ENCODE measurements at regions of chr6 and their contacts with region 1.

Region 1: DNA sequence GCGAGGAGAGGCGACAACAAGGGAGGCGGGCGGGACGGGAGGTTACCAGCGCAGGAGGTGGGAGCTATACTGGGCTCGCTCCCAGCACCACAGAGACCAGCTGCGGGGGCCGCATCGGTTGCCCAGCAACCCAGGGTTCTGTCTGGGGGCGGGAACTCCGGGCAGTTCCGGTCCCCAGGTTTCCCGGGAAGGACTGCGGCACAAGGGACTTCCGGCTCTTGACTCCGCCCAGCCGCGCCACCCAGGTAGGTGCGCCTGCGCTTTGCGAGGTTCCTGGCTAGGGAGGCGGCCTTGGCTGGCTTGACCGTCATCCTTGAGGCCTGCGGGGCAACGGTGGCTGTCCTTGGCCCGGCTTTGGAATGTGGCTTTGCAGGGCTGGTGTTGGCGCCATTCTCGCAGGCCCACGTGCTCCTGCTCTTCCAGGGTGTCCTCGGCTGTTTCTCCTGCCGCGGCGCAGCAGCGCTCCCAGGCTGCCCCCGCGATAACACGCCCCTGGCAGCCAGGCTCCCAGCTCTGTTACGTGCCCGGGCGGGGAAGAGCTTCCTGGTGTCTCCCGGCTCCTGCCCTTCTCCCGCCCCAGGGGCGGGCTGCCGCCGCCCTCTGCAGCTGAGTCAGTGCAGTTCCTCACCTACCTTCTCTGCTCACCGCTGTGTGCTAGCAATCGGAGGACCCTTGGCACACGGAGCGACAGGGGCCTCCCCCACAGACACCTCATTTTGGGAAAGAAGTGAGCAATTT is at the start of gene RSPH3:
- DNase-seq: peak; percentile 80
- ATAC-seq: peak; percentile 95
- H3K4me3 ChIP-seq: peak within 1 kb of the TSS; percentile 93 to 95
- H3K27ac ChIP-seq: peak within 1 kb of the TSS; percentile 93
- H3K4me1 ChIP-seq: peaks cover 15% of the 10 kb centered on the region
- H3K27me3 ChIP-seq: no peaks in the 10 kb centered on the region
- CTCF ChIP-seq: peak; percentile 39
- total RNA-seq, gene RSPH3: 8.1 TPM

Region 2: DNA sequence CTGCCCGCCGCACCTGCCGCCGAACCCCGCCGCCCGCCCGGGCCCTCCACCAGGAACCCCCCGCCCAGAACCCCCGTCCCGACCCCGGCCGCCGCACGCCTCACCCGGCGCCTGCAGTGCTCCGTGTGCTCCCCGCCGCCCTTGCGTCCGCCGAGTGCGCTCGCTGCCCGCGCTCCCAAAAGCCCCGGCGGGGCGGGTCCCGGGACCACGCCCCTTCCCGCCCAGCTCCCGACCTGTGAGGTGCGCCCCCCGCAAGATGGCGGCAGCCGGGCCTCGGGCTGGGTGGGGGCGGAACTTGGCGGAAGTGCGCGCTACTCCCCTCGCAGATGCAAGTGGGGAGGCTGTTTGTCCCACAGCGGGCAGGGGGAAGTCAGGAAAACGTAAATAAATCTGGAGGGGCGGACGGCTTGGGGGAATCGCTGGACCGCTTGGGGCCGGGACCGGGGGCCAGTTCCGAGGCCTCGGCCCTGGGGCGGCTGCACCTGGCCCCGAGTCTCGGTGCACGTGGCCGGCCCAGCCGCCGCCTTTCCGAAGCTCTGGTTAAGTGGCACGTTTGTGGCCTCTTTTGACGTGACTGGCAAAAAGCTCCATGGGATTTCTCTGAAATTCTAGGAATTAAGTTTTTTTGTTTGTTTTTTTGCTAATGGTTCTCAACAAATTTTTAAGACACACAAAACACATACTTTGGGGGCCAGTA is 180.5 kb before region 1 on chr6 and contains the start of gene EZR:
- CTCF ChIA-PET with region 1: no interaction called
- POLR2A ChIA-PET with region 1: interaction called, 13 read pairs
- in situ Hi-C with region 1: no loop called
- intact Hi-C with region 1: no loop called
- DNase-seq: no peak
- ATAC-seq: peak; percentile 86
- H3K4me3 ChIP-seq: peak within 1 kb of the TSS; percentile 86 to 89
- H3K27ac ChIP-seq: peak within 1 kb of the TSS; percentile 85
- H3K4me1 ChIP-seq: peaks cover 25% of the 10 kb centered on the region
- H3K27me3 ChIP-seq: no peaks in the 10 kb centered on the region
- CTCF ChIP-seq: no peak
- total RNA-seq, gene EZR: 263 TPM

Region 3: DNA sequence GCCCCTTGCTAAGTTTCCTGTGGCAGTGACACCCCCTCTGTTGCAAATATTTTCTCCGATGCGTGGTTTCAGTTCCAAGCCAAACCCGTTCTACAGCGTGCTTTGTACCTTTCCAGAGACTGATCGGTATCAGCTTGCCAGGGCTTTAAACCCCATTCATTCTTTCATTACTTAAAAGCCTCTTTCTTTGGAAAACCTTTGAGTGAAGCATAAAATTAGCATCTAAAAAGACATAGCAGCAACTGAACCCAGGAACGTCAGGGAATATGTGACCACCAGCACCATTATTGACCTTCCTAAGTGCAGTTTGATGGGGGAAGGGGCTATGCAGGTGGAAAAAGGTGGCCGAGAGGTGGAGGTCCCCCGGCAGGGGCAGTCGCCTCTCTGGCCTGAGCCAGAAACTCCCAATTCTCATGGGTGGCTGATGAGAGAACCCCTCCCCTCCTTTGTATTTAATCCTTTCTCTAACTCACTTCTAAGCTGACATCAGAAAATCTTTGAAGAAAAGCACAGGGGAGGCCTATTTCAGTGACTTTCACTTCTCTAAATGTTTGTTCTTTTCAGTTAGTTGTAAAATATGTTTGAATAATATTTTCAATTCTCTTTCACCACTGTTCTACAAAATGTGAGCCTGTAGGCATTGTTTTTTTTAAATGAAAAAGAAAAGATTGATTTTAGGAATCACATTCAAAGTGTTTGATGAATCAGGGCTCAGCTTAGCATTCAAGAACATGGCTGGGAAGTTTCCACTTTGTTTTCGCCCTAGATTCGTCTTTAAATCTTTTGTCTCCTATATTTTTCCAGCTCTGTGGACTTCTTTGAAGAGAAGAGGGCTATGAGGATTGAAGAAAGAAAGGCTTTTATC is 89.1 kb before region 1 on chr6:
- CTCF ChIA-PET with region 1: no interaction called
- POLR2A ChIA-PET with region 1: no interaction called
- in situ Hi-C with region 1: no loop called
- intact Hi-C with region 1: no loop called
- DNase-seq: no peak
- ATAC-seq: no peak
- H3K4me3 ChIP-seq: peak overlapping the region in 1 of 2 experiments; percentile 19; a peak in 2 of 4 replicates
- H3K27ac ChIP-seq: peak overlapping the region; percentile 25; the same call in 1 of the 2 replicates
- H3K4me1 ChIP-seq: no peaks in the 10 kb centered on the region; the same call in 1 of the 2 replicates
- H3K27me3 ChIP-seq: no peaks in the 10 kb centered on the region
- CTCF ChIP-seq: no peak

Region 4: DNA sequence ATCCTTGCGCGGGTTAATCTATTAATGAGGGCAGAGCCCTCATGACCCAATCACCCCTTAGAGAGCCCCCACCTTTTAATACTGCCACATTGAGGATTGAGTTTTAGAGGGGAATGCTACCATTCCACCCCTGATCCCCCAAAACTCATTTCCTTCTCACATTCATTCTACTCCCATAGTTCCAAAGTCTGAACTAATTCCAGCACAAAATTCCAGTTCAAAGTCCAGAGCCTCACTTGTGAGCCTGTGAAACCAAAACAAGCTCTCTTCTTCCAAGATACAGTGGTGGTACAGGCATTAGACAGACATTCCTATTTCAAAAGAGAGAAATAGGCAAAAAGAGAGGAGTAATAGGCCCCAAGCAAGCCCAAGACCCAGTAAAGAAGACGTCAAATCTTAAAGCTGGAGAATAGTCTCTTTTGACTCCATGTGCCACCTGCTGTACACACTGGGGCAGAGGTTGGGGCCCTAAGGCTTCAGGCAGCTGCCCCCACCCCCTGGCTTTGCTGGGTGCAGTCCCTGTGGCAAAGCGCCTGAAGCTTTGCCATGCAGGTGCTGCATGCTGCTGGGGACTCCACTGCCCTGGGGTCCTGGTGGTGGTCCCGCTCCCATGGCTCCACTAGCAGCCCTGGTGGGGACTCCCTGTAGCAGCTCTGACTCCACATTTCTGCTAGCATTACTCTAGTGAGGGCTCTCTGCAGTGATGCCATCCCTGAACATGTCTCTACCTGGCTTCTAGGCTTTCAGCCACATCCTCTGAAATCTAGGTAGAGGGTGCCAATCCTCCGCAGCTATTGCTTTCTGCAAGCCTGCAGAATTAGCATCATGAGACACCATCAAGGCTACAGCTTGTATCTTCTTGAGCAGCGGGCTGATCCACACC is 41.1 kb before region 1 on chr6:
- CTCF ChIA-PET with region 1: no interaction called
- POLR2A ChIA-PET with region 1: interaction called, 13 read pairs
- in situ Hi-C with region 1: no loop called
- intact Hi-C with region 1: no loop called
- DNase-seq: no peak
- ATAC-seq: peak; percentile 75
- H3K4me3 ChIP-seq: no peak overlapping the region
- H3K27ac ChIP-seq: no peak overlapping the region
- H3K4me1 ChIP-seq: no peaks in the 10 kb centered on the region
- H3K27me3 ChIP-seq: no peaks in the 10 kb centered on the region
- CTCF ChIP-seq: peak; percentile 54

Region 5: DNA sequence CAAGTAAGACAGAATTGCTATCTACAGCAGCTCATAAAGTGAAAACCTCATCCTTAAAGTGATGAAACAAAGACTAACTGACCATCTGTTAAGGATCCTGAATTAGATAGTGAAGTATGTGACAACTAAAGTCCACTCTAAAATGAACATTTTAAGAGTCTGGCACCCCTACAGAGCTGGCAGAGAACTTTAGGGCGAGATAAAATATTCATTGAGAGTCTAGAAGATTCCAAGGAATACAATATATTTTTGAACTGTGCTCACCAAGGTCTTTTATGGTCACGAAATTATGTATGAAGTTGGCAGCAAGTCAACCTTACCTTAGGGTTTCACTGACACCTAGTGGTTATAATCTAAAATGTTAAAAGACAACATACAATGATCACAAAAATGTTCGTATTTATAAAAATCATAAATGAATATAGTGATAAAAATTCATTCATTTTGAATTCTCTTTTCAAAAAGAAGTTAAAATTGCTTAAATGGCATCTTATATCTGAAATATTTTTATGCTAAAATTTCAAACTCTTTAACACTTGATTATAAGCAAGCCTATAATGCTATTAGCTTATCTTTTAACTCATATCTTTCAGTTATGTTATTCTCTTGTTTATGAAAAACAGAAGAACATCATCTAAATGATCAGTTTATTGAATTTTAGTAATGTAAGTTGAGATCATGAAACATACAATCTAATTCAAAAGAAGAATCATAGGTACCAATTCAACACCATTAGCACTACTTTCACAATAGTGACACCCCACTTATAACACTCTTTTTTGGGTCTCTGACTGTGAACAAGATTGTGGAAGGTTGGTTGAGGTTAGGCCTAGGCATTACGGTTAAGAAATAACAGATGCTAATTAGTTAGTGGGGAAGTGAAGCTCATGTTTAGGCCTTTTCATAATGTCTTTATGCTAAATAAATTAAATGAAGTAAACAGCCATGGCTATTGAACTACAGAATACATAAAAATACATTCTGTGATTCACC is 27.3 kb before region 1 on chr6:
- CTCF ChIA-PET with region 1: no interaction called
- POLR2A ChIA-PET with region 1: interaction called, 18 read pairs
- in situ Hi-C with region 1: no loop called
- intact Hi-C with region 1: no loop called
- DNase-seq: peak; percentile 35
- ATAC-seq: peak; percentile 63; the same call in 1 of the 2 replicates
- H3K4me3 ChIP-seq: no peak overlapping the region
- H3K27ac ChIP-seq: no peak overlapping the region
- H3K4me1 ChIP-seq: no peaks in the 10 kb centered on the region
- H3K27me3 ChIP-seq: no peaks in the 10 kb centered on the region
- CTCF ChIP-seq: peak; percentile 43; the same call in 1 of the 2 replicates